ENCODE measurements at regions of chr15 and their contacts with region 1.

Region 1: DNA sequence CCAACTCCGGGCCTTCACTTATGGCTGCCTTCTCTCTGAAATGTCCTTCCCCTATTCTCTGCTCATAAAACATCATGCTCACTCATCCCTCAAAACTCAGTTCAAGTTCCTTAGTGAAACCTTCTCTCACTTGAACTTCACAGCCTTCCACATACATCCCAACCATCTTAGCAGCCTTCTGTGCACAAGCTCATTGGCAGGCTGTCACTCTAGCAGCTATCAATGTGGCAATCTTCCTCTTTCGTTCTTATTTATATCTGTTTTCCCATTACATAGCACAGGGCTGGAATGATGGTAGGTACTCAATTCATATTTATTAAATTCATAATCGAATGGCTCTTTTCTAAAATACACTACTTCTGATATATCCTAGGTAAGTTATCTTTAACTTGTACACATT is 66.4 kb upstream of the MCTP2 start:
- DNase-seq: no peak
- ATAC-seq: no peak

Region 2: DNA sequence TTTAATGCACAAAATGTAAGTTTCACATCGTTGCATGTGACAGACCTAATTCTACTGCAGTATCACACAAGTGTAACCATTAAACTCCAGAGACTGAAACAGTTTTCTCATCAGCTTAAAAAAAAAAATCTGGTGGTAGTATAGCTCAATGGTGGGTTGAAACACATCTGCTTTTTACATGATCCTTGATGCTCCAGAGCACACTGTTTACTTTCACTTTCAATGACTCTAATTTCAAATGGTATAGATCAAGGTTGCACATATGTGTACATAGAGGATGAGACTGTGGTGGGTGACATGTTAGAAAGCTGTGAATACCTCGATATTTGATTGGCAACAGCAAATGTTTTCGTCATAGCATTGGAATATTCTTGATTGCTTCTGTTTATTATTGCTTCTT is 88.8 kb after region 1 on chr15:
- intact Hi-C with region 1: no loop called
- DNase-seq: no peak
- ATAC-seq: no peak

Region 3: GRCh38 chr15:94324117-94324826 is 159.3 kb after region 1 on chr15:
- intact Hi-C with region 1: loop called (anchors 1 kb)
- DNase-seq: no peak
- ATAC-seq: peak; percentile 86

Measured in Right ventricle myocardium inferior (tissue), 1 donor.